Dendritic cell treated with granulocyte-macrophage colony-stimulating factor and Interleukin-4, amounts not matched to agents 40 ng/mL and 50 ng/mL, for 4 days (primary cell): ENCODE measurements at regions of chr12 and their contacts with region 1.

Region 1: DNA sequence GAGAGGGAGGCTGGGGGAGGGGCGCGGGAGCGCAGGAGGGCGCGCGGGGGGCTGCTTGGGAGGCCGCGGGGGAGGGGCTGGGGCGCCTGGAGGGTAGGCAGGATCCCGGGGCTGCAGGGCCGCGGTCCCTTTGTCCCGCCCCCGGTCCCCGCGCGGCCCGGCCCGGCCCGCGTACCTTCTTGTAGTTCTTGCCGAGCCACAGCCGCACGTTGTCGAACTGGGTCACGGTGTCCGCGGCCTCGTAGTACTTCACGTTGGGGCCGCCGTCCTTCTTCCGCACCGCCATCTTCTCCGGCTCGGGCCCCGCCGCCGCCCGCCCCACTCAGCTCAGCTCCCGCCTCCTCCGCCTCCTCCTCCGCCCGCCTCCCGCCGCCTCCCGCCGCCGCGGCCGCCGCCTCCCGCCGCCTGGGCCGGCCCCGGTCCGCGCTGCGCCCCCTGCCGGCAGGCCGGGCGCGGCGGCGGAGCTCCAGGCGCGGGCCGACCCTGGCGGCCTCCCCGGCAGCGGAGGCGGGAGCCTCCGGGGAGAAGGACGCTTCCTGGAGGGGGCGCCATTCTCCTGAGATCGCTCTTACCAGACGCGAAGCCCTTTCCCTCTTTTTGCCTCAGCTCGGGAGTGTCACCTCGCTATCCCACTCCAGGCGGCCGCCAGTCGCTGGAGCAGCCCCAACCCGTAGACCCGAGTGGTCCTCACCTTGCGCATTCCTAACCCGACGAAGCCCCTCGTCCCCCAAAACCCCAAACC is at the start of gene SMARCC2:
- H3K4me3 Mint-ChIP-seq: peak within 1 kb of the TSS; percentile 95
- H3K27ac Mint-ChIP-seq: peak within 1 kb of the TSS; percentile 97
- H3K4me1 Mint-ChIP-seq: peaks cover 43% of the 10 kb centered on the region
- H3K27me3 Mint-ChIP-seq: no peaks in the 10 kb centered on the region

Region 2: GRCh38 chr12:56127888-56128669 is 61.3 kb before region 1 on chr12 and contains the start of gene ESYT1:
- intact Hi-C with region 1: loop called (anchors 2 kb)
- H3K4me3 Mint-ChIP-seq: peak within 1 kb of the TSS; percentile 98
- H3K27ac Mint-ChIP-seq: peak within 1 kb of the TSS; percentile 85
- H3K4me1 Mint-ChIP-seq: peaks cover 71% of the 10 kb centered on the region
- H3K27me3 Mint-ChIP-seq: no peaks in the 10 kb centered on the region

Region 3: DNA sequence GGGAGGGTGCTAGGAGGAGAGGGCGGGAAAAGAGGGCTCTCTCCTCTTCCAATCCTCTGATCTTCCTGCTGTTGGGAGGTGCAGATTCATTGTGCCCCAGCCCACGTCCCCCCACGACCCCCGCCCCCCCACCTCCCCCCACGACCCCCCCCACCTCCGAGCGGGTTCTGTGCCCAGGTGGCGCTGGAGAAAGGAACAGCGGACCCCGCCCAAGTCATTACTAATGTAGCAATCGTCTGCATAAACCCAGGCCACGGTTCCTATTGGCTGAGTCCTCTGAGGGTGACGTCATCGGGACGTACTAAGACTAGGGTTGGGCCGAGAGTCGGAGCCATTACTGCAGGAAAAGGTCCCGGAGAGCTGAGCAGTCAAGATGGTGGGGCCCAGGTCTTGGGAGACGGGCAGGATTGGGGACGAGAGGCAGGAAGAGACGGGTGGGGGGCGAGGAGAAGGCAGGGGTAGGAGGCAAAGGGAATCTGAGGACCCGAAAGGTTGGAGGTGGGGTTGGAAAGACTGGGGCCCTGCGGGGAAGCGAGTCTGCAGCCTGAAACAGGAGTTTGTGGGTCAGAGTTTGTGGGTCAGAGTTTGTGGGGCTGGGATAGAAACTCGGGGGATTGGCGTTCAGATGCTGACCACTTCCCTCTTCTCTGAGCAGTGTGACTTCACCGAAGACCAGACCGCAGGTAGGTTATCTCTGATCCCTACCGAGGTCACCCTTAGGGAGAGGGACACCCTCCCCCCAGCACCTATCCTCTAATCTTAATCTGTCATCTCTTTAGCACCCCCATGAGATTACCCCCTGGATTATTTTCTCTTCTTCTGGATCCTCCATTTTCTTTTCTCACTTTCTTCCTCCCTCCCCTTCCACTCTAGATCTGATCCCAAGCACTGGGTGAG is 31.1 kb before region 1 on chr12 and contains the start of gene MYL6:
- intact Hi-C with region 1: loop called (anchors 2 kb)
- H3K4me3 Mint-ChIP-seq: peak within 1 kb of the TSS; percentile 93
- H3K27ac Mint-ChIP-seq: peak within 1 kb of the TSS; percentile 98
- H3K4me1 Mint-ChIP-seq: peaks cover 63% of the 10 kb centered on the region
- H3K27me3 Mint-ChIP-seq: no peaks in the 10 kb centered on the region

Region 4: GRCh38 chr12:56224102-56224701 is 34.9 kb after region 1 on chr12 and contains the start of gene NABP2:
- intact Hi-C with region 1: loop called (anchors 1 kb)
- H3K4me3 Mint-ChIP-seq: peak within 1 kb of the TSS; percentile 81
- H3K27ac Mint-ChIP-seq: peak within 1 kb of the TSS; percentile 100
- H3K4me1 Mint-ChIP-seq: peaks cover 52% of the 10 kb centered on the region
- H3K27me3 Mint-ChIP-seq: no peaks in the 10 kb centered on the region

Region 5: DNA sequence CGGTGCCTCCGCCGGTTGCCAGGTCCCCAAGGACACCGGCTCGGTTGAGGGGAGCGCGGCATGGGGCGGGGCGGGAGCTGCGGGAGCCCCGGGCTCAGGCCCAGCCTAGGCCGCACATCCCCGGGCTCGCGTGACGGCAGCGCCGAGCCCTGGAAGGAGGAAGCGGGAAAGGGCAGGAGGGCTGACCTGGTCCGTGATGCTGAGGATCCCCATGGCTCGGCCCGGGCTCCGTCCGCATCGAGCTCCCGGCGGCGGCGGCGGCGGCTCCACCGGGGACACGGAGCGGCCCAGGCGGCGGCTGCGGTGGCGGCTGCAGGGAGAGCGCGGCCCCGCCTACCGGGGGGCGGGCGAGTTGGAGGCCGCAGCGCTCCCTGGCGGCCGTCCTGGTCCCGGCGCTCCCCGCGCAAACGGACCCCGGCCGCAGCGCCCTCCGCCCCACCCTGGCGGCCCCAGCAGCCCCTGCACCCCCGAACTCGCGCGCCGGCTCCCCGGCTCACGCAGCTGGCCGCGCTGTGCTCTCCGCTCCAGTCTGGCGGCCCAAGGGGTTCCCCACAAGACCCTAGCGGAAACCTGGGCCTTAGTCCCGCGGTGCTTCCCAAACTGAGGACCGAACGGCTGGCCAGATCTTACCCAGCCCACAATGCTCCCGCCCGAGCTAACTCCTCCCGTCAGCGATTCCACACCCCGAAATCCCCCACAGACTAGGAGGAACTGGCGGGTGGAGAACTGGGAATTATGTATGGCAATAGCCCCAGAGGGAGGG is 68.9 kb after region 1 on chr12 and contains the start of gene ANKRD52:
- intact Hi-C with region 1: loop called (anchors 2 kb)
- H3K4me3 Mint-ChIP-seq: peak within 1 kb of the TSS; percentile 87
- H3K27ac Mint-ChIP-seq: peak within 1 kb of the TSS; percentile 86
- H3K4me1 Mint-ChIP-seq: peaks cover 18% of the 10 kb centered on the region
- H3K27me3 Mint-ChIP-seq: no peaks in the 10 kb centered on the region

Region 6: GRCh38 chr12:56468216-56469006 is 279.1 kb after region 1 on chr12 and contains the start of gene SPRYD4:
- intact Hi-C with region 1: loop called (anchors 5 kb)
- H3K4me3 Mint-ChIP-seq: peak within 1 kb of the TSS; percentile 94
- H3K27ac Mint-ChIP-seq: peak within 1 kb of the TSS; percentile 98
- H3K4me1 Mint-ChIP-seq: peaks cover 33% of the 10 kb centered on the region
- H3K27me3 Mint-ChIP-seq: no peaks in the 10 kb centered on the region